ENCODE measurements at regions of chr22 and their contacts with region 1.

Region 1: GRCh38 chr22:37538590-37539357 is 19.6 kb upstream of the CARD10 start:
- DNase-seq: peak; percentile 80 to 93 (median 89)
- ATAC-seq: peak; percentile 99
- H3K4me3 ChIP-seq: no peak overlapping the region
- H3K4me3 Mint-ChIP-seq: peak overlapping the region; percentile 56
- H3K27ac ChIP-seq: no peak overlapping the region
- H3K27ac Mint-ChIP-seq: no peak overlapping the region
- H3K4me1 ChIP-seq: peaks cover 16% of the 10 kb centered on the region
- H3K4me1 Mint-ChIP-seq: peaks cover 17% of the 10 kb centered on the region
- H3K27me3 ChIP-seq: peaks cover 0 to 8% of the 10 kb centered on the region in 2 experiments
- H3K27me3 Mint-ChIP-seq: peaks cover 30% of the 10 kb centered on the region
- CTCF ChIP-seq: peak; percentile 89

Region 2: DNA sequence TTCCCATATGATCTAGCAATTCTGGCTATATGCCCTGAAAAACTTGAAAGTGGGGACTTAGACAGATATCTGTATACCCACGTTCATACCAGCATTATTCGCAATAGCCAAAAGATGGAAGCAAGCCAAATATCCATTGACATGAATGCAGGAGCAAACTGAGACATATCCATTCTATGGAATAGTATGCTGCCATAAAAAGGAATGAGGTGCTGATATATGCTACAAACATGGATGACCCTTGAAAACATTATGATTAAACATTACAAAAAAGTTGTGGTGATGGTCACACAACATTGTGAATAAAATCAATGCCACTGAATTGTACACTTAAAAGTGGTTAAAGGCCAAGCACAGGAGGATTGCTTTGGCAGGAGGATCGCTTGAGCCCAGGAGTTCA is 78.1 kb before region 1 on chr22:
- CTCF ChIA-PET with region 1: no interaction called
- POLR2A ChIA-PET with region 1: no interaction called
- intact Hi-C with region 1: no loop called
- DNase-seq: no peak
- ATAC-seq: no peak
- H3K4me3 ChIP-seq: no peak overlapping the region
- H3K4me3 Mint-ChIP-seq: no peak overlapping the region
- H3K27ac ChIP-seq: no peak overlapping the region
- H3K27ac Mint-ChIP-seq: no peak overlapping the region
- H3K4me1 ChIP-seq: no peaks in the 10 kb centered on the region
- H3K4me1 Mint-ChIP-seq: peaks cover 3% of the 10 kb centered on the region
- H3K27me3 ChIP-seq: no peaks in the 10 kb centered on the region
- H3K27me3 Mint-ChIP-seq: no peaks in the 10 kb centered on the region
- CTCF ChIP-seq: no peak

Region 3: GRCh38 chr22:37561212-37562048 is 22.7 kb after region 1 on chr22:
- CTCF ChIA-PET with region 1: interaction called, 540 read pairs
- POLR2A ChIA-PET with region 1: interaction called, 32 read pairs
- intact Hi-C with region 1: loop called in 1 of 2 experiments (anchors 1 kb)
- DNase-seq: peak; percentile 65 to 84 (median 78)
- ATAC-seq: peak; percentile 69
- H3K4me3 ChIP-seq: peak overlapping the region; percentile 12 to 22
- H3K4me3 Mint-ChIP-seq: peak overlapping the region; percentile 74
- H3K27ac ChIP-seq: no peak overlapping the region
- H3K27ac Mint-ChIP-seq: no peak overlapping the region
- H3K4me1 ChIP-seq: peaks cover 28% of the 10 kb centered on the region
- H3K4me1 Mint-ChIP-seq: peaks cover 23% of the 10 kb centered on the region
- H3K27me3 ChIP-seq: peaks cover 13 to 24% of the 10 kb centered on the region in 2 experiments
- H3K27me3 Mint-ChIP-seq: peaks cover 24% of the 10 kb centered on the region
- CTCF ChIP-seq: peak; percentile 73

Region 4: GRCh38 chr22:37588546-37589215 is 49.9 kb after region 1 on chr22:
- CTCF ChIA-PET with region 1: interaction called, 30 read pairs
- POLR2A ChIA-PET with region 1: interaction called, 9 read pairs
- intact Hi-C with region 1: loop called (anchors 1 kb)
- DNase-seq: no peak
- ATAC-seq: no peak
- H3K4me3 ChIP-seq: no peak overlapping the region
- H3K4me3 Mint-ChIP-seq: no peak overlapping the region
- H3K27ac ChIP-seq: no peak overlapping the region
- H3K27ac Mint-ChIP-seq: no peak overlapping the region
- H3K4me1 ChIP-seq: peaks cover 6% of the 10 kb centered on the region
- H3K4me1 Mint-ChIP-seq: peaks cover 11% of the 10 kb centered on the region
- H3K27me3 ChIP-seq: peaks cover 0 to 2% of the 10 kb centered on the region in 2 experiments
- H3K27me3 Mint-ChIP-seq: peaks cover 3% of the 10 kb centered on the region
- CTCF ChIP-seq: no peak

Region 5: GRCh38 chr22:37594237-37594636 is 55.5 kb after region 1 on chr22:
- CTCF ChIA-PET with region 1: interaction called, 30 read pairs
- POLR2A ChIA-PET with region 1: interaction called, 9 read pairs
- intact Hi-C with region 1: loop called (anchors 1 kb)
- DNase-seq: no peak
- ATAC-seq: no peak
- H3K4me3 ChIP-seq: no peak overlapping the region
- H3K4me3 Mint-ChIP-seq: no peak overlapping the region
- H3K27ac ChIP-seq: no peak overlapping the region
- H3K27ac Mint-ChIP-seq: no peak overlapping the region
- H3K4me1 ChIP-seq: peaks cover 6% of the 10 kb centered on the region
- H3K4me1 Mint-ChIP-seq: peaks cover 12% of the 10 kb centered on the region
- H3K27me3 ChIP-seq: no peaks in the 10 kb centered on the region
- H3K27me3 Mint-ChIP-seq: no peaks in the 10 kb centered on the region
- CTCF ChIP-seq: no peak